Naive thymus-derived CD8-positive, alpha-beta T cell (primary cell): ENCODE measurements at regions of chr6 and their contacts with region 1.

Region 1: GRCh38 chr6:43454696-43455530 is 435 bp downstream of the DLK2 start:
- DNase-seq: peak in 9 of 10 donors; percentile 8 to 43 (median 32)
- ATAC-seq: peak; percentile 56 to 59
- H3K4me3 Mint-ChIP-seq: peak overlapping the region; percentile 77 to 90 (median 84)
- H3K27ac Mint-ChIP-seq: peak overlapping the region in 8 of 10 donors; percentile 31 to 93 (median 80)
- H3K4me1 Mint-ChIP-seq: peaks cover 8 to 29% (median 16%) of the 10 kb centered on the region in 4 donors
- H3K27me3 Mint-ChIP-seq: peaks cover 0 to 4% (median 0%) of the 10 kb centered on the region in 5 donors

Region 2: GRCh38 chr6:43477235-43478007 is 22.5 kb after region 1 on chr6 and contains the start of gene TJAP1:
- POLR2A ChIA-PET with region 1: interaction called, 14 read pairs
- DNase-seq: peak; percentile 92 to 97 (median 96)
- ATAC-seq: peak; percentile 98 to 99
- H3K4me3 Mint-ChIP-seq: peak within 1 kb of the TSS; percentile 90 to 99 (median 96)
- H3K27ac Mint-ChIP-seq: peak within 1 kb of the TSS; percentile 91 to 100 (median 96)
- H3K4me1 Mint-ChIP-seq: peaks cover 22 to 47% (median 41%) of the 10 kb centered on the region in 4 donors
- H3K27me3 Mint-ChIP-seq: no peaks in the 10 kb centered on the region
- polyA plus RNA-seq, gene TJAP1: 5.1 to 12.1 (median 8.4) TPM